K562 (cell line): ENCODE measurements at regions of chr13 and their contacts with region 1.

Region 1: GRCh38 chr13:48769107-48769704 is 115.5 kb downstream of the CYSLTR2 start:
- DNase-seq: peak; percentile 57 to 78 (median 69)
- ATAC-seq: peak; percentile 93
- H3K4me3 ChIP-seq: no peak overlapping the region
- H3K27ac ChIP-seq: no peak overlapping the region
- H3K4me1 ChIP-seq: no peaks in the 10 kb centered on the region
- H3K27me3 ChIP-seq: no peaks in the 10 kb centered on the region
- CTCF ChIP-seq: peak; percentile 92 to 100 (median 99)
- EP300 ChIP-seq: no peak
- POLR2A ChIP-seq: no peak
- RAD21 ChIP-seq: peak; percentile 99 to 100

Region 2: GRCh38 chr13:46831588-46832194 is 1937.5 kb before region 1 on chr13:
- CTCF ChIA-PET with region 1: interaction called, 3 read pairs
- POLR2A ChIA-PET with region 1: no interaction called
- in situ Hi-C with region 1: no loop called
- intact Hi-C with region 1: loop called (anchors 2 kb)
- DNase-seq: peak; percentile 10 to 57 (median 27)
- ATAC-seq: peak; percentile 79
- H3K4me3 ChIP-seq: no peak overlapping the region
- H3K27ac ChIP-seq: no peak overlapping the region
- H3K4me1 ChIP-seq: no peaks in the 10 kb centered on the region
- H3K27me3 ChIP-seq: peaks cover 0 to 4% of the 10 kb centered on the region in 2 experiments; a peak in 1 of 5 replicates
- CTCF ChIP-seq: peak; percentile 49 to 74 (median 56); a peak in 4 of 6 replicates
- EP300 ChIP-seq: no peak
- POLR2A ChIP-seq: no peak
- RAD21 ChIP-seq: peak; percentile 78 to 85

Region 3: DNA sequence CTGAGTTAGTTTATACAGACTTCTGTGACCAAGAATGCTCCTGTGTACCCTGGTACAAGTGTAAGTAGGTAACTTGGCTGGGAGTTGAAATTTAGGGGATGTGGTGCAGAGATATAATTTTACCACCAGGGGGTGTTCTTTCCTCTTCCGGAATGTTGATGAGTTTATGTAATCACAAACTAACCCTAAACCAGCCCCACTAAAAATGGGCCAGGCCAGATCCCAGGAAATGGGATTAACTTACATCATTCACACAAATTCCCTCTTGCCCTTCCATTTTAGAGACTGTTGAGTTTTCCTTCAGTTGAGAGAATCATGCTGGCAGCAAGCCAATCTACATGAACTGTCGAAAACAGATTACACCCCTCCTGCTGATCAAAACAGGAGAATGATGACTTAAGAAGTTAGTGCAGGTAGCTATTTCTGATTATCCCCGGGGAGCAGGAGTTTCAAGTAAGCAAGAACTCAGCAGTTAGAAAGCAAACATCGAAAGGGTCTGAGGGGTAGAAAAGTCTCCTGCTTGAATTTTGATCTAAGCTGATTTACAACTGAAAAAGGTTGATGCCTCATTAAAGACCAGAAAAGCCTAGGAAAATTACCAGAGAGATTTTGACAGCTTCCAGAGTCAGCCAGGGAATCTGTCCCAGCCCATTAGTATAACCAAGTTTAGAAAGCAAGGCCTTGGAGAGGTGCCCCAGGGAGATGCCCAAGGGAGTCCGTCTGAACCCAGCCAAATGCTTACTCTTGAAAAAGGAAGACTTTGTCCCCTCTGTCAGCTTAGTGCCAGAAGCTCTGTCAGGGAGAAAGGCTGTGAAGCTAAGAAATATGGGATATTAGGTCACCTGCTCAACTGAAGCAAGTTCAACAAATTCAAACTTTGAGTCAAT is 642.0 kb before region 1 on chr13:
- CTCF ChIA-PET with region 1: interaction called, 7 read pairs
- POLR2A ChIA-PET with region 1: no interaction called
- in situ Hi-C with region 1: no loop called
- intact Hi-C with region 1: loop called (anchors 1 kb)
- DNase-seq: peak; percentile 50 to 61 (median 54)
- ATAC-seq: peak; percentile 90
- H3K4me3 ChIP-seq: no peak overlapping the region
- H3K27ac ChIP-seq: no peak overlapping the region
- H3K4me1 ChIP-seq: peaks cover 0 to 4% of the 10 kb centered on the region in 2 experiments; a peak in 1 of 5 replicates
- H3K27me3 ChIP-seq: no peaks in the 10 kb centered on the region
- CTCF ChIP-seq: peak; percentile 45 to 74 (median 60)
- EP300 ChIP-seq: no peak
- POLR2A ChIP-seq: no peak
- RAD21 ChIP-seq: peak; percentile 85 to 89

Region 4: GRCh38 chr13:48334534-48335127 is 434.6 kb before region 1 on chr13:
- CTCF ChIA-PET with region 1: interaction called, 3 read pairs
- POLR2A ChIA-PET with region 1: no interaction called
- in situ Hi-C with region 1: loop called (anchors 25 kb)
- intact Hi-C with region 1: loop called (anchors 10 kb)
- DNase-seq: peak in 2 of 4 experiments; percentile 7 to 21
- ATAC-seq: peak; percentile 55; the same call in 1 of the 3 replicates
- H3K4me3 ChIP-seq: no peak overlapping the region
- H3K27ac ChIP-seq: no peak overlapping the region
- H3K4me1 ChIP-seq: no peaks in the 10 kb centered on the region
- H3K27me3 ChIP-seq: no peaks in the 10 kb centered on the region
- CTCF ChIP-seq: peak in 2 of 3 experiments; percentile 40 to 49; a peak in 3 of 6 replicates
- EP300 ChIP-seq: no peak
- POLR2A ChIP-seq: no peak
- RAD21 ChIP-seq: peak in 1 of 2 experiments; percentile 66; a peak in 2 of 4 replicates

Region 5: DNA sequence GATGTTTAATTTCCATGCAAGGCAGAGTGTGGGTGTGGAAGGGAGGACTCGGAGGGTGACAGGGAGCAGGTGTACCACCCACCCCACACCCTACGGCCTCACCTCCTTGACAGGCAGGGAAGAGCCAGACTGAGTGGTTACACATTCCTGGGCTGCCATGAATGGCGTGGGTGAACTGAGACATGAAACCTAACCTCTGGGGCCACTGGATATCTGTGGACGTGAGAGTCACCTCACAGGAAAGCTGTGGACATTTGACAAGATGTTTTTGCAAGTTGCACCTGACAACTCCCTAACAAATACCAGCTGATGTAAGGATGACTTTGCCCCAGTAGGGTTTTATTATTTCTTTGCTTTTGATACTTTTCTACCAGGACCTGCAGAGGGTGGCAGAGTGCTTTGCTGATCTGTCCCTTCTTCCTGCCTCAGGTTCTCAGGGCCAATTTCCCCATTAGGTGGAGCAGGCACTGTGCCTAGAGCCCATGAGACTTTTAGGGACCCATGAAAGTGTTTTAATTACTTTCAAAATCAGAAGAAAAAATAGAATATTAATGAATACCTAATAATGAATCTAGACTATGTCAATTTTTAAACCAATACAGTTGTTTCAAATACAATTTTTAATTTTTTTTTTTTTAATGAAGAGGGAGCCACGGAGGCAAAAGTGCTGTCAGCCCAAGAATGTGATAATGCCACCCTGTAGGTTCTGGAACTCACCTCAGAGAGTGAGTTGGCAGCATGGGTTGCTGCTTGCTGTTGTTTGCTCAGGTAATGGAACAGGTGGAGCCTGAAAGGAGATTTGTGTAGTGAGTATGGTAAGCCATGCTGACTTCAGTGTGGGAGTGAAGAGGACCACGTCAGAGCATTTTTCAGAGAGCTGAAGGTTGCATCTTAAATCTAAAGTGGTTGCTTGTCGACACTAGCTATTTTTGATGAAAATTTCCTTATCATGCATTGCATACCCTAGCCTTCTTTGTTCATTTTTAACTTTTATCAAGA is 173.5 kb before region 1 on chr13:
- CTCF ChIA-PET with region 1: interaction called, 48 read pairs
- POLR2A ChIA-PET with region 1: no interaction called
- in situ Hi-C with region 1: loop called (anchors 5 kb)
- intact Hi-C with region 1: loop called (anchors 1 kb)
- DNase-seq: peak; percentile 9 to 57 (median 19)
- ATAC-seq: peak; percentile 79
- H3K4me3 ChIP-seq: no peak overlapping the region
- H3K27ac ChIP-seq: no peak overlapping the region
- H3K4me1 ChIP-seq: no peaks in the 10 kb centered on the region
- H3K27me3 ChIP-seq: no peaks in the 10 kb centered on the region
- CTCF ChIP-seq: peak; percentile 60 to 93 (median 91)
- EP300 ChIP-seq: no peak
- POLR2A ChIP-seq: no peak
- RAD21 ChIP-seq: peak; percentile 94 to 95

Region 6: GRCh38 chr13:48731957-48732569 is 37.1 kb before region 1 on chr13:
- CTCF ChIA-PET with region 1: interaction called, 5 read pairs
- POLR2A ChIA-PET with region 1: interaction called, 3 read pairs
- in situ Hi-C with region 1: no loop called
- intact Hi-C with region 1: loop called (anchors 1 kb)
- DNase-seq: peak; percentile 44 to 57 (median 52)
- ATAC-seq: peak; percentile 99
- H3K4me3 ChIP-seq: no peak overlapping the region
- H3K27ac ChIP-seq: no peak overlapping the region
- H3K4me1 ChIP-seq: peaks cover 2 to 3% of the 10 kb centered on the region in 2 experiments; a peak in 4 of 5 replicates
- H3K27me3 ChIP-seq: no peaks in the 10 kb centered on the region; a peak in 1 of 5 replicates
- CTCF ChIP-seq: peak; percentile 70 to 83 (median 78)
- EP300 ChIP-seq: no peak
- POLR2A ChIP-seq: no peak
- RAD21 ChIP-seq: peak; percentile 52 to 74